Common myeloid progenitor, CD34-positive (primary cell): ENCODE measurements at regions of chr19 and their contacts with region 1.

Region 1: DNA sequence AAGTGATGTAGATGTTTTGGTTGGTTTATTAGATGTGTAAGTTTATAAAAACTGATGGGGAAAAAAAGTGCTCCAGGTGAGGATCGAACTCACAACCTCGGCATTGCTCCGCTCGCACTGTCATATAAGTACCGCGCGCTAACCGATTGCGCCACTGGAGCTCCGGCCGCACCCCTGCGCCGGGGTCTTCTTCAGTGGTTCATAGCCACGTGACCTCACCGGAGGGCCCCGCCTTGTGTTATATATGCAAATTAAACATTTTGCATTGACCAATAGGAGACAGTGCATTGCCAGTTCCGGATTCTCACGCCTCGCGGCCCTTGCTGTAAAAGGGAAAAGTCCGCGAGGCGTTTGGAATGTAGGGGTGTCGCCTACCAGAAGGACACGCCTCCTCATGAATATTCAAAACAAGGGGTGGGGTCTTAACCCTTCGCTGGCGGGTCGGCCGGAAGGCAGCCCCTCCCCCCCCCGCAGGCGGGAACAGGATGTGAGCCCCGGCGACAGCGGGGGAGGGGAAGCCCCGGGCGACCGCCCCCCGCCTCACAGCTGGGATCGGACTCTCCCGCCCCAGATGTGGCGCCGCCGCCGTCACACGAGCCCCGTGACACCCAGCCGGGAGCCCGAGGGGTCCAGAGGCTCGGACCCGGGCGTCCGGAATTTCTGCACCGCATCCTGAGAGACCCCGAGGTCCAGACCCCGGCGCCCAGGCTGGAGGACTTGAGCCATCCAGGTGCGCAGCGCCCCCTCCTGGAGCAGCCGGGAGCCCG is at the start of gene PLEKHG2:
- DNase-seq: peak; percentile 99 to 100 (median 100)
- H3K4me3 ChIP-seq: peak within 1 kb of the TSS; percentile 79 to 98 (median 90)
- H3K27ac ChIP-seq: peak within 1 kb of the TSS; percentile 75 to 95
- H3K4me1 ChIP-seq: peaks cover 16 to 60% (median 48%) of the 10 kb centered on the region in 4 experiments
- H3K27me3 ChIP-seq: no peaks in the 10 kb centered on the region

Region 2: GRCh38 chr19:39390755-39391592 is 21.3 kb before region 1 on chr19 and contains the starts of genes MED29 and PAF1:
- CTCF ChIA-PET with region 1: interaction called, 34 read pairs
- POLR2A ChIA-PET with region 1: interaction called, 21 read pairs
- DNase-seq: peak; percentile 100
- H3K4me3 ChIP-seq: peak within 1 kb of the TSS; percentile 55 to 99 (median 98)
- H3K27ac ChIP-seq: peak within 1 kb of the TSS; percentile 98 to 99
- H3K4me1 ChIP-seq: peaks cover 7 to 22% (median 19%) of the 10 kb centered on the region in 4 experiments
- H3K27me3 ChIP-seq: no peaks in the 10 kb centered on the region

Region 3: DNA sequence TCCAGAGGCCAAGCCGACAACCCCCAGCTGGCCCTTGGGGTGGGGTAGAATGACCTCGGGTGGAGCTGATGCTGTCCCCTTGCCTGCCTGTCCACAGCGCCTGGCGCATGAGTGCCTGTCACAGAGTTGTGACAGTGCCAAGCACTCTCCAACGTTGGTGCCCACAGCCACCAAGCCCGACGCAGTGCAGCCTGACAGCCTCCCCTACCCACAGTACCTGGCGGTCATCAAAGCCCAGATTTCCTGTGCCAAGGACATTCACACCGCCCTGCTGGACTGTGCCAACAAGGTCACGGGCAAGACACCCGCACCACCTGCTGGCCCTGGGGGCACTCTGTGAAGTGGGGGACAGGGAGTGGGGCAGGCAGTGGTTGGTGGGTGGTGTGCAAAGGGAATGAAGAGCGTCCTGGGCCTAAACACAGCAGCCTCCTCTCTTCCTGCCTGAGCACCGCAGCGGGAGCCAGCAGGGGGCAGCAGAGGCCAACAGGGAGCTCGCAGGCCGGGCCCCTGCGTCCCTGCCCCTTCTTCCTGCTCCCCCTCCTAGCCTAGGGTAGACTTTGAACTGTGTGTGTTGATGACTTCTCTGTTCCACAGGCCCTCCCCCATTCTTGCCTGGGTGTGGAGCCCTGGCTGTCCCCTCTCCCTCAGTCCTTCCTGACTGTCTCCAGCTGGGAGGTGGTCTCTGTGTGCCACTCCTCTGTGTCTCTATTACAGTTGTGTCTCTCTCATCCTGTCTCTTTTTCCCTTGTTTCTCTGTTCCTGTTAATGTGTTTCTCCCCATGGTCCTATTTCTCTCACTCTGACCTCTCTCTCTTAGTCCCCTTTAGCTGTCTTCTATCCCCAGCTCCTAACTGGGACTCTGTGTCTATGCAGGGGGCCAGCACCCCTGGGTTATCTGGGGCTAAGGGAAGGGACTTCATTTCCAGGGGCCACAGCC is 14.7 kb before region 1 on chr19:
- CTCF ChIA-PET with region 1: interaction called, 119 read pairs
- POLR2A ChIA-PET with region 1: interaction called, 47 read pairs
- DNase-seq: peak; percentile 85 to 92 (median 89)
- H3K4me3 ChIP-seq: peak overlapping the region in 2 of 7 experiments; percentile 21
- H3K27ac ChIP-seq: peak overlapping the region; percentile 55 to 79
- H3K4me1 ChIP-seq: peaks cover 12 to 50% (median 37%) of the 10 kb centered on the region in 4 experiments
- H3K27me3 ChIP-seq: no peaks in the 10 kb centered on the region

Region 4: GRCh38 chr19:39428283-39429112 is 16.2 kb after region 1 on chr19:
- CTCF ChIA-PET with region 1: interaction called, 21 read pairs
- POLR2A ChIA-PET with region 1: interaction called, 3 read pairs
- DNase-seq: no peak
- H3K4me3 ChIP-seq: no peak overlapping the region
- H3K27ac ChIP-seq: no peak overlapping the region
- H3K4me1 ChIP-seq: peaks cover 0 to 7% (median 0%) of the 10 kb centered on the region in 4 experiments
- H3K27me3 ChIP-seq: no peaks in the 10 kb centered on the region

Region 5: DNA sequence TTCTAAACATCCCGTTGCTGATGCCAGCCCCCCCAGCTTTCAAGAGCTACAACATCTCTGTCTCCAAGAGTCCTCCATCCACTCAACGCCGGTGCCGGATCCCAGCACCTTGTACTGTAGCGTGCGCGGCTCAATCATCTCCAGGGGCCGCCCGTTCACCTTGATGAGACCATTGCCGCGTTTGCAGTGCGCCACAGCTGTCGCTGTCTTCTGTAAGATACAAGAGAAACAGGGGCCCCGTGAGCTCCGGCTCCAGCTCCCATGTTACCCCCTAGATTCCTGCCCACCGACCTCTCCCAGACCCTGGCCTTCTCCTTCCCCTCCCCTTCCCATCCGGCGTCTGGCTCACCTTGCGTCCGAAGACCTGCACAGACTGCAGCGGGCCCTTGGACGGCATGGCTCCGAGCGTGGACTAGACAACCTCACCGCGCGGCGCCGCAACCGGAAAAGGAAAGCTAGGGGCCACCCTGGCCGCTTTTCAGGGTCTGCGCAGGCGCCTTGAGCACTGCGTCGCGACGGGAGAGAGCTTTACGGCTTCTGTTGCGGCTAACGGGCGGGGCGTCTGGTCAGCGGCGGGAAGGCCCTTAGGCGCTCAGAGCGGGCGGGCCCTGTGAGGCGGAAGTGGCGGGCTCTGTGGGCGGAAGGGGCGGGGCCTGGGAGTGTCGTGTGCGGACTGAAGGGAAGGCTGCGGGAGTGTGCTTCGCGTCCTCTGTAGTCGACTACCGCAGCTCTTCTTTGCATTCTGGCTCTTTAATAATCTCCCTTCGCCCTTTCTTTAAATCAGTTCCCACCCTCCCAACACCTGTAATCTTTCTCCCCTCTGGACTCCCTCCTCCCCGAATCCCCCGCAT is 23.4 kb after region 1 on chr19 and contains the start of gene RPS16:
- CTCF ChIA-PET with region 1: interaction called, 8 read pairs
- POLR2A ChIA-PET with region 1: interaction called, 16 read pairs
- DNase-seq: peak; percentile 98 to 99 (median 98)
- H3K4me3 ChIP-seq: peak within 1 kb of the TSS; percentile 90 to 99 (median 95)
- H3K27ac ChIP-seq: peak within 1 kb of the TSS; percentile 89 to 94
- H3K4me1 ChIP-seq: peaks cover 4 to 33% (median 23%) of the 10 kb centered on the region in 4 experiments
- H3K27me3 ChIP-seq: no peaks in the 10 kb centered on the region